ENCODE measurements at regions of chr7 and their contacts with region 1.

Region 1: DNA sequence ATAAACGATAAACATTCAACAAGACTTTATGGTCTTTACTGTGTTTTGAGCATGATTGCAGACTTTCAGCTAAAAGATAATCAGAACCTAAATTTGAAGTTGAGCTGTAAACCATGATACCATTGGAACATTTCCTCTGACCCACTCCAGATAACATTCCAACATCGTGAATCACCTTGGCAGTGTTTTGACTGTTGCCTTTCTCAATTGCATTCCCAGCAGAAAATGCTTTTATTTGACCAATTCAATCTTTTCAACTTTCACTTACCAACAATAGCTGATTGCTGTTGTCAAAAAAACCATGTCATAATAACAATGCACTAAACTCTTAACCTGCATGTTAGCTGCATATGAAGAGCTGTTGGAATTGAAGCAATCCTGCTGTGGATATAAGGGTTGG is 165.5 kb downstream of the MDFIC start:
- DNase-seq: peak in 1 of 2 donors; percentile 47
- ATAC-seq: peak in 7 of 8 donors; percentile 77 to 93 (median 90)
- H3K4me3 ChIP-seq: no peak overlapping the region
- H3K27ac ChIP-seq: peak overlapping the region in 6 of 10 donors; percentile 9 to 50 (median 26)
- H3K4me1 ChIP-seq: peaks cover 0 to 32% (median 21%) of the 10 kb centered on the region in 9 donors
- H3K27me3 ChIP-seq: no peaks in the 10 kb centered on the region
- CTCF ChIP-seq: no peak

Region 2: GRCh38 chr7:115008465-115009114 is 78.8 kb before region 1 on chr7:
- intact Hi-C with region 1: loop called in 1 of 10 experiments (anchors 5 kb)
- DNase-seq: peak; percentile 71 to 84
- ATAC-seq: peak; percentile 89 to 97 (median 94)
- H3K4me3 ChIP-seq: peak overlapping the region in 1 of 10 donors; percentile 1
- H3K27ac ChIP-seq: peak overlapping the region in 7 of 10 donors; percentile 3 to 63 (median 27)
- H3K4me1 ChIP-seq: peaks cover 0 to 54% (median 35%) of the 10 kb centered on the region in 9 donors
- H3K27me3 ChIP-seq: no peaks in the 10 kb centered on the region
- CTCF ChIP-seq: no peak

Region 3: DNA sequence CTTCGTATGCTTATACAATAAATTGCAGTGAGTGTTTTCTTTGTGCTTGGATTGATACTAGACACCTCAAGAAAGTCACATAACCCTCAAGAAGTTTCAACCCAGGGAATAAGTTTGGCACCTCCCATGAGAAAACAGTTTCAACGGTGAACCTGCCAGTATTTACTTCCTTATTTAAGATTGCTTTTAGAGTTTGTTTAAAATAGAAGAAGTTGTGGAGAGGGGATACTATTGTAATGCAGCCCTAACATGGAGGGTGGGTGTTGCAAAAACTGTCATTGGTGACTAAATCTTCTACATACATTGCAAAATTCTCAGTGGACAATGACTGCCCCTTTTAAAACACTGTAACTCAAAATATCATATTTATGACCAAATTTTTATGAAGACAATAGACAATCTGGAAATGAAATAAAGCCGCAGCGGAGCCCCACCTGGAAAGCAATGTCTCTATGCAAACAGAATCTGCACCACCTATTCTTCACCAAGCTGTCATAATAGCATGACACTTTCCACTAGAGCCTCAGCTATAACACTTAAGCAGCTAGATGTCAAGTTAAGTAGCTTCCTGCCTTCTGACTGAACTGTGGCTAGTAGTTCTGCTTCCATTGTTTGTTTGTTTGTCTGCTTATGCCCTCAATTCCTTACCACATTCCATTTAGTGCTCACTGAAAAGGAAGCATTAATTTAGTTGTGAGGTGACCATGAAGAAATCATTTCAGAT is 67.4 kb before region 1 on chr7:
- intact Hi-C with region 1: no loop called
- DNase-seq: no peak
- ATAC-seq: no peak
- H3K4me3 ChIP-seq: no peak overlapping the region
- H3K27ac ChIP-seq: no peak overlapping the region
- H3K4me1 ChIP-seq: peaks cover 0 to 21% (median 0%) of the 10 kb centered on the region in 9 donors
- H3K27me3 ChIP-seq: no peaks in the 10 kb centered on the region
- CTCF ChIP-seq: no peak

Region 4: GRCh38 chr7:115153769-115154477 is 66.5 kb after region 1 on chr7:
- intact Hi-C with region 1: no loop called
- DNase-seq: no peak
- ATAC-seq: no peak
- H3K4me3 ChIP-seq: no peak overlapping the region
- H3K27ac ChIP-seq: no peak overlapping the region
- H3K4me1 ChIP-seq: no peaks in the 10 kb centered on the region
- H3K27me3 ChIP-seq: no peaks in the 10 kb centered on the region
- CTCF ChIP-seq: no peak

Region 5: GRCh38 chr7:115217373-115217772 is 129.9 kb after region 1 on chr7:
- intact Hi-C with region 1: loop called in 2 of 10 experiments (anchors 10 kb)
- DNase-seq: no peak
- ATAC-seq: no peak
- H3K4me3 ChIP-seq: no peak overlapping the region
- H3K27ac ChIP-seq: no peak overlapping the region
- H3K4me1 ChIP-seq: peaks cover 0 to 7% (median 4%) of the 10 kb centered on the region in 9 donors
- H3K27me3 ChIP-seq: no peaks in the 10 kb centered on the region
- CTCF ChIP-seq: peak in 8 of 9 donors; percentile 16 to 63 (median 49)